ENCODE measurements at regions of chr12 and their contacts with region 1.

Region 1: GRCh38 chr12:56258057-56258819 is at the start of gene ANKRD52:
- DNase-seq: peak; percentile 65 to 76 (median 73)
- H3K4me3 ChIP-seq: peak within 1 kb of the TSS; percentile 61 to 94 (median 86)
- H3K4me3 Mint-ChIP-seq: peak within 1 kb of the TSS; percentile 92 to 96
- H3K27ac ChIP-seq: peak within 1 kb of the TSS in 1 of 2 donors; percentile 69
- H3K27ac Mint-ChIP-seq: peak within 1 kb of the TSS; percentile 63 to 90 (median 87)
- H3K4me1 ChIP-seq: peaks cover 17 to 18% of the 10 kb centered on the region in 2 donors
- H3K4me1 Mint-ChIP-seq: peaks cover 18% of the 10 kb centered on the region
- H3K27me3 ChIP-seq: no peaks in the 10 kb centered on the region
- H3K27me3 Mint-ChIP-seq: peaks cover 0 to 2% (median 0%) of the 10 kb centered on the region in 3 donors
- CTCF ChIP-seq: peak; percentile 84
- polyA plus RNA-seq, gene ANKRD52: 1.5 to 12.4 (median 2.4) TPM

Region 2: GRCh38 chr12:56206457-56207166 is 51.6 kb before region 1 on chr12:
- intact Hi-C with region 1: loop called in 1 of 2 experiments (anchors 5 kb)
- DNase-seq: peak; percentile 35 to 45 (median 42)
- H3K4me3 ChIP-seq: no peak overlapping the region
- H3K4me3 Mint-ChIP-seq: no peak overlapping the region
- H3K27ac ChIP-seq: peak overlapping the region in 1 of 2 donors; percentile 32
- H3K27ac Mint-ChIP-seq: peak overlapping the region in 5 of 7 donors; percentile 22 to 61 (median 44)
- H3K4me1 ChIP-seq: no peaks in the 10 kb centered on the region
- H3K4me1 Mint-ChIP-seq: peaks cover 2% of the 10 kb centered on the region
- H3K27me3 ChIP-seq: no peaks in the 10 kb centered on the region
- H3K27me3 Mint-ChIP-seq: no peaks in the 10 kb centered on the region
- CTCF ChIP-seq: peak; percentile 52

Region 3: DNA sequence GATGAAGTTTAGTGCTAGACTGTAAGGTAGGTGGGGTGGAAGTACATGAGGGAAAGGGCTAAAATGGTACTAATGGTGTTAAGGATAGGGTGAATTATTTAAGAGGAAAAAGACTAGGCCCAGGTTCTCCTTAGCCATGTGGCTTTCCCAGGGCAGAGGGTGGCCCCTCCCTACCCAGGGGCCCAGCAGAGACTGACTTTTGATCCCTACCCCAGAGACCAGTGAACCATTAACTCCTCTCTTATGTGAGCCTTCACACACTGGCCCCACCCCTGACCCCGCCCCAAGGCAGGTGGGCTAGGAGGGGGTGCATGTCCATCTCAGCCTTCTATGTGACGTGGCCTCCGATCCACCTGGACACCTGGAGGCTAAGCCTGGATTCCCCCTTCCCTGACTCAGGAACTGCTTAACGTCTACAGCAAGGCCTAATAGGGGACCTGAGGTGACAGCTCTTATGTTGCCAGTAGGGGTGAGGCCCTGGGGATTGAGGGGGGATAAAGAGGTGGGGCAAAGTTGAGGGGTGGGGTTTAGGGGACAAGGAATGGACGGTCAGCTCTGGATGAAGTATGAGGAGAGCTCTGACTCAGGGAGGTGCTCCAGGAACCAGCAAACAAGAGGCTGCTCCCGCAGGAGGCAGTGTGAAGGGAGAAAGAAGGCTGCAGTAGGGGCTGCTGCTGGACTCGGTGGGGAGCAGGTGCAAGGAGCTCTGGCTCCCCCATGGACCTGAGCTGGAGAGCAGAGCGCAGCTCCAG is 27.6 kb before region 1 on chr12:
- intact Hi-C with region 1: no loop called
- DNase-seq: no peak
- H3K4me3 ChIP-seq: no peak overlapping the region
- H3K4me3 Mint-ChIP-seq: no peak overlapping the region
- H3K27ac ChIP-seq: no peak overlapping the region
- H3K27ac Mint-ChIP-seq: peak overlapping the region in 1 of 7 donors; percentile 71
- H3K4me1 ChIP-seq: no peaks in the 10 kb centered on the region
- H3K4me1 Mint-ChIP-seq: peaks cover 5% of the 10 kb centered on the region
- H3K27me3 ChIP-seq: no peaks in the 10 kb centered on the region
- H3K27me3 Mint-ChIP-seq: peaks cover 0 to 2% (median 1%) of the 10 kb centered on the region in 3 donors
- CTCF ChIP-seq: no peak

Region 4: DNA sequence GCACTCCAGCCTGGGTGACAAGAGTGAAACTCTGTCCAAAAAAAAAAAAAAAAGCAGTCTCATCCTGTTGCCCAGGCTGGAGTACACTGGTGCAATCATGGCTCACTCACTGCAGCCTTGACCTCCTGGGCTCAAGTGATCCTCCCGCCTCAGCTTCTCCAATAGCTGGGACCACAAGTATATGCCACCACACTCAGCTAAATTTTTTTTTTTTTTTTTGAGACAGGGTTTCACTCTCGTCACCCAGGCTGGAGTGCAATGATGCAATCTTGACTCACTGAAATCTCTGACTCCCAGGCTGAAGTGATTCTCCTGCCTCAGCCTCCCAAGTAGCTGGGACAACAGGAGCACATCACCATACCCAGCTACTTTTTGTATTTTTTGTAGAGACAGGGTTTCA is 62.8 kb after region 1 on chr12:
- intact Hi-C with region 1: no loop called
- DNase-seq: peak; percentile 78 to 94 (median 83)
- H3K4me3 ChIP-seq: no peak overlapping the region
- H3K4me3 Mint-ChIP-seq: no peak overlapping the region
- H3K27ac ChIP-seq: peak overlapping the region; percentile 45 to 65
- H3K27ac Mint-ChIP-seq: peak overlapping the region; percentile 65 to 92 (median 86)
- H3K4me1 ChIP-seq: peaks cover 10 to 24% of the 10 kb centered on the region in 2 donors
- H3K4me1 Mint-ChIP-seq: peaks cover 15% of the 10 kb centered on the region
- H3K27me3 ChIP-seq: no peaks in the 10 kb centered on the region
- H3K27me3 Mint-ChIP-seq: no peaks in the 10 kb centered on the region
- CTCF ChIP-seq: no peak